ENCODE measurements at regions of chr17 and their contacts with region 1.

Region 1: DNA sequence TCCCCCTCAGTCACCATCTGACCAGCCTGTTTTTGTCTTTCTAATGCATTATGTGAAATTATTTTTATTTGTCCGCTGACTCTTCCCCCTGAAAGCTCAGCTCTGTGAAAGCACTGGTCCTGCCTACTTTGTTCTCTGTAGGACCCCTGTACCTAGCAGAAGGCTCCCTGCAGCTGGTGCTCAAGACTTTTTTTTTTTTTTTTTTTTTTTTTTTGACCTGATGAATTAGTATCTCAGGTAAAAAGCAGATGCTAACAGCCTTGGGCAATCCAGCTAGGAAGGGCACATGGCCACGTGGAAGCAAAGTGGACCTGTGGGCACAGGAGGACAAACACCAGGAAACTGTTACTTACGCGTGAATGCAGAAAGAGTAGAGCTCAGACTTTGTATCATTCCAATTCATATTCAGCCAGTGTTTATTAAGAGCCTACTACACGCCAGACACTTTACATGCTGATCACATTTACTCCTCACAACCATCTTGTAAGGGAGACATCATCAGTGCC is 629 bp upstream of the UNC119 start:
- DNase-seq: no peak
- ATAC-seq: no peak
- H3K4me3 ChIP-seq: peak overlapping the region; percentile 72 to 77
- H3K27ac ChIP-seq: peak overlapping the region; percentile 25; the same call in 1 of the 2 replicates
- H3K4me1 ChIP-seq: peaks cover 9% of the 10 kb centered on the region; the same call in 1 of the 2 replicates
- H3K27me3 ChIP-seq: no peaks in the 10 kb centered on the region
- CTCF ChIP-seq: no peak

Region 2: GRCh38 chr17:28585851-28586250 is 32.8 kb after region 1 on chr17:
- CTCF ChIA-PET with region 1: no interaction called
- POLR2A ChIA-PET with region 1: interaction called, 12 read pairs
- in situ Hi-C with region 1: no loop called
- intact Hi-C with region 1: no loop called
- DNase-seq: no peak
- ATAC-seq: no peak
- H3K4me3 ChIP-seq: no peak overlapping the region
- H3K27ac ChIP-seq: no peak overlapping the region
- H3K4me1 ChIP-seq: no peaks in the 10 kb centered on the region
- H3K27me3 ChIP-seq: no peaks in the 10 kb centered on the region
- CTCF ChIP-seq: no peak

Measured in Panc1 (cell line).